Natural killer cell (primary cell): ENCODE measurements at regions of chrX and their contacts with region 1.

Region 1: GRCh38 chrX:54639346-54640102 is 109.5 kb downstream of the GNL3L start:
- DNase-seq: peak; percentile 79 to 95
- ATAC-seq: peak; percentile 89 to 98 (median 90)
- H3K4me3 ChIP-seq: peak overlapping the region; percentile 68
- H3K4me3 Mint-ChIP-seq: peak overlapping the region; percentile 95
- H3K27ac ChIP-seq: peak overlapping the region; percentile 98
- H3K27ac Mint-ChIP-seq: peak overlapping the region; percentile 98 to 99
- H3K4me1 ChIP-seq: peaks cover 8% of the 10 kb centered on the region
- H3K4me1 Mint-ChIP-seq: peaks cover 5 to 13% of the 10 kb centered on the region in 2 donors
- H3K27me3 ChIP-seq: no peaks in the 10 kb centered on the region
- H3K27me3 Mint-ChIP-seq: peaks cover 0 to 15% of the 10 kb centered on the region in 2 donors
- CTCF ChIP-seq: peak; percentile 52

Region 2: DNA sequence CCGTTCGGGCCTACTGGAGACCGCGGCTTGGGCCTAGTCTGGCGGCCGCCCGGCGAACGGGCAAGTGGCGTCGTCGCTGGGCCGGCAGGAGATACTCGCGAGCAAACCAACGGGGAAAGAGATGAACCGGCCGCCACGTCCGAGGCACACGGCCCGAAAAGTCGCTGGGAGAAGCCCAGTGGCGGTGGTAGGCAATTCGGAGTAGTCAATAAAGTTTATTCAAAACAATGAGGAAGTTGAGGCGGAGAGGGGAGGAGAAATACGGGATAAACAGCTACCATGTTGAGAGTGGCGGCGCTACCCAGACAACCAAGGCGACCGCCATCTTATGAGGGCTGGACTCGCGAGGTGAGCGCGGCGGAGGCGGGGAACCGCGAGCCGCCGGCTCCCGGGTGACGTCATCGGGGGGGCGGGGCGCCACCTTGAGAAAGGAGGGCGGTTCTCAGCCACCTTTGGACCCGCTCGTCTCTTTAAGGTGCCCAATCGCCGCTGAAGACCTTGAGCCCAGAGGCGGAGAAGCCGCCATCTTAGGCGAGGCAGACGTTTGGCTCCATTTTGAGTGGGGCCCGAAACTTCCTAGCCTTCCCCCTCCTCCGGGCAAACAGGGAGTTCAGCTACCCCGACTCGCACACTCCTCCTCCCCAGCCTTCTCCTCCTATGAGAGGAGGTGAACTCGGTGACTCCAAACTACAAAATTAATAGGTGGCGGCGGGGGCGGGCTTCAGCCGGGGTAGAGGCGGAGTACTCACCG is 595.2 kb before region 1 on chrX and contains the start of gene PHF8:
- intact Hi-C with region 1: loop called (anchors 5 kb)
- DNase-seq: peak; percentile 93 to 95
- ATAC-seq: peak; percentile 81 to 94 (median 84)
- H3K4me3 ChIP-seq: peak within 1 kb of the TSS; percentile 83
- H3K4me3 Mint-ChIP-seq: peak within 1 kb of the TSS; percentile 95
- H3K27ac ChIP-seq: peak within 1 kb of the TSS; percentile 92
- H3K27ac Mint-ChIP-seq: peak within 1 kb of the TSS; percentile 91 to 94
- H3K4me1 ChIP-seq: peaks cover 18% of the 10 kb centered on the region
- H3K4me1 Mint-ChIP-seq: peaks cover 8 to 13% of the 10 kb centered on the region in 2 donors
- H3K27me3 ChIP-seq: no peaks in the 10 kb centered on the region
- H3K27me3 Mint-ChIP-seq: no peaks in the 10 kb centered on the region
- CTCF ChIP-seq: no peak
- total RNA-seq, gene PHF8: 55.4 to 74.1 (median 72.6) TPM

Region 3: GRCh38 chrX:54076903-54077302 is 562.6 kb before region 1 on chrX:
- intact Hi-C with region 1: no loop called
- DNase-seq: no peak
- ATAC-seq: no peak
- H3K4me3 ChIP-seq: no peak overlapping the region
- H3K4me3 Mint-ChIP-seq: no peak overlapping the region
- H3K27ac ChIP-seq: no peak overlapping the region
- H3K27ac Mint-ChIP-seq: no peak overlapping the region
- H3K4me1 ChIP-seq: no peaks in the 10 kb centered on the region
- H3K4me1 Mint-ChIP-seq: no peaks in the 10 kb centered on the region
- H3K27me3 ChIP-seq: no peaks in the 10 kb centered on the region
- H3K27me3 Mint-ChIP-seq: no peaks in the 10 kb centered on the region
- CTCF ChIP-seq: no peak

Region 4: GRCh38 chrX:54306379-54306778 is 333.1 kb before region 1 on chrX:
- intact Hi-C with region 1: no loop called
- DNase-seq: no peak
- ATAC-seq: no peak
- H3K4me3 ChIP-seq: no peak overlapping the region
- H3K4me3 Mint-ChIP-seq: no peak overlapping the region
- H3K27ac ChIP-seq: no peak overlapping the region
- H3K27ac Mint-ChIP-seq: no peak overlapping the region
- H3K4me1 ChIP-seq: no peaks in the 10 kb centered on the region
- H3K4me1 Mint-ChIP-seq: no peaks in the 10 kb centered on the region
- H3K27me3 ChIP-seq: no peaks in the 10 kb centered on the region
- H3K27me3 Mint-ChIP-seq: peaks cover 0 to 3% of the 10 kb centered on the region in 2 donors
- CTCF ChIP-seq: no peak

Region 5: DNA sequence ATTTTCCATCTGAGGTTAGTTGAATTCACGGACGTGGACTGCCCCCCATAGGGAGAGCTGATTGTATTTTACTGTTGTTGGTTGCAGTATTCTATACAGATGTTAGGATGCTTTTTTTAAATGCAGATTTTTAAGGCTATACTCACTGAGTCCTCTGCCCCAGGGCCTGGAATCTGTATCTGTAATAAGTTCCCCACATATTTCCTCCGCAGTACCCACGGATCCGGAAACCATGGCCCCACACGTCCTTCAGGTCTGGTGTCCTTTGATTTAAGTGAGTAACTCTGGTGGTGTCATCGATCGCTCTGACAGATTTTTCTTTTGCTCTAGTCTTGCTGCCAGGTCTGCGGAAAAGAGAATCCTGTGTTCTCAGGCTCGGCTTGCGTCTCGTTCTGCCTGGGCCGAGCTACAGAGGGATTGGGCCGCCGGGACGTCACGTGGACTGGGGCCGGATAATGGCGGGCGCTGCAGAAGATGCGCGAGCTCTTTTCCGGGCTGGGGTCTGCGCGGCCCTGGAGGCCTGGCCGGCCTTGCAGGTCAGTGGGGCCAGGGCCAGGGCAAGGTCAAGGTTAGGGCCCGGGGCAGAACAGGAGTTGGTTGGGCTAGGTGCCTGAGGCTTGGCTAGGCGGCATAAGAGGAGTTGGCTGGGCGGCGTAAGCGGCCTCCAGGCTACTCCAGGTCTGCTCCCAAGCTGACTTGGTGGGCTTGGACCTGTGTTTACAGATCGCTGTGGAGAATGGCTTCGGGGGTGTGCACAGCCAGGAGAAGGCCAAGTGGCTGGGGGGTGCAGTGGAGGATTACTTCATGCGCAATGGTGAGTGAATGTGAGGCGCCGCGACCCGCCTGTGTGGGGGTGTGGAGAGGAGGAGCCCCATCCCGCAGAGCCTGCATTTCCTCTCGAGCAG is 199.3 kb before region 1 on chrX and contains the start of gene TSR2:
- intact Hi-C with region 1: loop called (anchors 1 kb)
- DNase-seq: peak; percentile 75 to 87
- ATAC-seq: peak; percentile 95 to 99 (median 97)
- H3K4me3 ChIP-seq: peak within 1 kb of the TSS; percentile 99
- H3K4me3 Mint-ChIP-seq: peak within 1 kb of the TSS; percentile 99
- H3K27ac ChIP-seq: peak within 1 kb of the TSS; percentile 73
- H3K27ac Mint-ChIP-seq: peak within 1 kb of the TSS; percentile 87 to 99
- H3K4me1 ChIP-seq: peaks cover 20% of the 10 kb centered on the region
- H3K4me1 Mint-ChIP-seq: peaks cover 14 to 37% of the 10 kb centered on the region in 2 donors
- H3K27me3 ChIP-seq: no peaks in the 10 kb centered on the region
- H3K27me3 Mint-ChIP-seq: peaks cover 3 to 16% of the 10 kb centered on the region in 2 donors
- CTCF ChIP-seq: no peak
- total RNA-seq, gene TSR2: 39.0 to 40.4 (median 40.0) TPM

Region 6: GRCh38 chrX:54529552-54530357 is 109.8 kb before region 1 on chrX and contains the start of gene GNL3L:
- intact Hi-C with region 1: loop called (anchors 2 kb)
- DNase-seq: peak; percentile 68 to 89
- ATAC-seq: peak; percentile 86 to 94 (median 88)
- H3K4me3 ChIP-seq: peak within 1 kb of the TSS; percentile 89
- H3K4me3 Mint-ChIP-seq: peak within 1 kb of the TSS; percentile 92
- H3K27ac ChIP-seq: peak within 1 kb of the TSS; percentile 95
- H3K27ac Mint-ChIP-seq: peak within 1 kb of the TSS; percentile 85 to 86
- H3K4me1 ChIP-seq: peaks cover 27% of the 10 kb centered on the region
- H3K4me1 Mint-ChIP-seq: peaks cover 26 to 27% of the 10 kb centered on the region in 2 donors
- H3K27me3 ChIP-seq: no peaks in the 10 kb centered on the region
- H3K27me3 Mint-ChIP-seq: no peaks in the 10 kb centered on the region
- CTCF ChIP-seq: no peak
- total RNA-seq, gene GNL3L: 44.5 to 50.0 (median 49.2) TPM

Region 7: DNA sequence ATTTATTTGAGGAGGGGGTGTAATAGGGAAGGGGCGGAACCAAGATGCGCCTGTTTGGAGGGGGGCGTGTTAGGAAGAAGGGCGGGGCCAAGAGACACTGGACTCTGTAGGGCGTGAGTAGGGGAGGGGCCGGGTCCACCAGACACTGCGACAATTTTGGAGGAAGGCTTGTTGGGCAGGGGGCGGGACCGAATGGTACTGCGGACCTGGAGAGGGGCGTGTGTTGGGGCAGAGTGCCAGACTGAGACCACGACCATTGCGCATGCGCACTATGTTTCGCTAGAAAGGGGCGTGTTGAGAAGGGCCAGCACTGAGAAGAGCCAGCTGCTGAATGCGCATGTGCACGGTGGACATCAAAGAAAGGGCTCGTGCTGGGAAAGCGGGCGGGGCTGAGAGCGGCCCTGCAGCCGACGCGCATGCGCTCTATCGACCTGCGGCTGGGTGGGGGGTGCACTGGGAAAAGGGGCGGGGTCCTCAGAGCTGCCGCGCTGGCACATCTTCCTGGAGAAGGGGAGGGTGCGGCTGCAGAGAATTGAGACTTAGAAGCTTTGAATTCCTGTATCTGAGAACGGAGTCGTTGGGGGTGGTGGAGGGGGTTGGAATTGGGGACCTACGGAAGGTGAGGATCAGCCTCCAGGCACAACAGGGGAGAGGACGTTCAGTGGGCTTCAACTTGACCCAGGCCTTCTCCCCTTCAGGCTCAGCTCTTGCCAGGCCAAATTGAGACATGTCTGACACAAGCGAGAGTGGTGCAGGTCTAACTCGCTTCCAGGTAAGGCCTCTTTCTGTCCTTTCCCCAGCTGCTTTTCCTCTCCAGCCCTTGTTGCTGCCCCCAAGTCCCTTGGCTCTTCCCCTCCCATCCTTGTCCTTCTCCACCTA is 169.3 kb after region 1 on chrX:
- intact Hi-C with region 1: loop called (anchors 1 kb)
- DNase-seq: peak; percentile 75 to 96
- ATAC-seq: peak; percentile 81 to 89 (median 83)
- H3K4me3 ChIP-seq: peak overlapping the region; percentile 99
- H3K4me3 Mint-ChIP-seq: peak overlapping the region; percentile 88
- H3K27ac ChIP-seq: peak overlapping the region; percentile 92
- H3K27ac Mint-ChIP-seq: peak overlapping the region; percentile 86 to 95
- H3K4me1 ChIP-seq: peaks cover 20% of the 10 kb centered on the region
- H3K4me1 Mint-ChIP-seq: peaks cover 5 to 22% of the 10 kb centered on the region in 2 donors
- H3K27me3 ChIP-seq: no peaks in the 10 kb centered on the region
- H3K27me3 Mint-ChIP-seq: no peaks in the 10 kb centered on the region
- CTCF ChIP-seq: no peak